B cell (primary cell): ENCODE measurements at regions of chr9 and their contacts with region 1.

Region 1: DNA sequence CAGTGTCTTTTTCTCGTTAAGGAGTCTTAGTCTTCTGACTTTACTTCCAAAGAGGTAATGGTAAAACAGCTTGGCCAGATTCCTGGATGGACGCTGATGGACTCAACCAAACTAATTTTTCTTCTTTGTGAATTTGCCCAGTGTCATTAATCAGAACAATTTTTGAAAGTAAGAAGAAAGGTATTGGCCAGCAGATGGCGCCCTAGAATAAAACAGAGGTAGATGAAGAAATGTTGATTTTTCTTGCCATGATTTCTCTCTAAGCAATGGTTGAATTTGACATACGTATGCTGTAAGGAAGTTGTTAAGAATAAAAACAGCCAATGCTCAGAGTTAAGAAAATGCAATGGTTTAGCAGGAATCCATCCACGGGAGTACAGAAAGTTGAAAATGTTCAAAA is 500.0 kb downstream of the DIRAS2 start:
- DNase-seq: peak; percentile 80
- ATAC-seq: no peak
- H3K4me3 ChIP-seq: no peak overlapping the region
- H3K4me3 Mint-ChIP-seq: no peak overlapping the region
- H3K27ac ChIP-seq: no peak overlapping the region
- H3K27ac Mint-ChIP-seq: no peak overlapping the region
- H3K4me1 ChIP-seq: no peaks in the 10 kb centered on the region
- H3K4me1 Mint-ChIP-seq: peaks cover 4% of the 10 kb centered on the region
- H3K27me3 ChIP-seq: peaks cover 0 to 4% (median 0%) of the 10 kb centered on the region in 4 experiments
- H3K27me3 Mint-ChIP-seq: peaks cover 17% of the 10 kb centered on the region
- CTCF ChIP-seq: peak; percentile 76

Region 2: DNA sequence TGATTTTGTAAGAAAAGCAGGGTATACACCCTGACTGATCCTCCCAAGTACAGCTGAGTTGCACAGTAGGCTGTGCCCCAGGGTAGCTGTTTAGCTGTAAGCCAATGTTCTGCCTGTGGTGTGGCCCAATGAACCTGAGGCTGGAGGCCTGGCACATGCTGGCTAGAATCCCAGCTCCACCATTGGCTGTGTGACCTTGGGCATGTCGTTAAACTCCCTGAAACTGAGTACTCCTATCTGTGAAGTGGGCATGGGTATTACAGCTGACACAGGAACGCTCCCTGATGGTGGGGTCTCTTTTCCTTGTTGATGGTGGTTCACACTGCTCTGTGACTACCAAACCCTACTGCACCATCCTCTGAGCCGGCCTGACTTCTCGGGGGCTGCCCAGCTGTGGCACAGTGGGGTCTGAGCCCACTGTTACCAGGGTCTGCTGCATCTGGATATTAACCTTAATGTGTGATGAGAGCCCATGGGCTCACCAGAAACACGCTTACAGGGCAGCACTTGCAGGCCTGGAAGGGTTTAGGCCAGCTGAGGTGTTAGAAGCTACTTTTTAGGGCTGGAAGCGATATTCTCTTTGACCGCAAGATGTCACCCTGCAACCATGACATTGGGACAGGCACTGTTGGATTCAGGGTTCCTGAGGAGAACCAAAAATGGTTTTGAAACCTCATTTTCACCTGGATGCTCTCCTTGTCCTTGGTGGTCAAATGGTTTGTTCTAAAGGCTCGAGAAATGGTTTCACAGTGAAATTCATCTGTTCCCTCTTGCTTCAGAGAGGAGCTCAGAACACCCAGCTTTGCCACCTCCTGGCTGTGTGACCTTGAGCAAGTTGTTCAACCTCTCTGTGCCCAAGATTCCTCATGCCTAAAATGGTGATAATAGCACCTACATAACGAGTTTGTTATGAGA is 544.6 kb before region 1 on chr9:
- CTCF ChIA-PET with region 1: interaction called, 23 read pairs
- POLR2A ChIA-PET with region 1: no interaction called
- intact Hi-C with region 1: no loop called
- DNase-seq: peak; percentile 74
- ATAC-seq: no peak
- H3K4me3 ChIP-seq: no peak overlapping the region
- H3K4me3 Mint-ChIP-seq: no peak overlapping the region
- H3K27ac ChIP-seq: no peak overlapping the region
- H3K27ac Mint-ChIP-seq: no peak overlapping the region
- H3K4me1 ChIP-seq: peaks cover 0 to 3% of the 10 kb centered on the region in 2 donors
- H3K4me1 Mint-ChIP-seq: peaks cover 1% of the 10 kb centered on the region
- H3K27me3 ChIP-seq: peaks cover 0 to 14% (median 3%) of the 10 kb centered on the region in 4 experiments
- H3K27me3 Mint-ChIP-seq: peaks cover 22% of the 10 kb centered on the region
- CTCF ChIP-seq: peak; percentile 80

Region 3: GRCh38 chr9:90201766-90202165 is 59.2 kb after region 1 on chr9:
- CTCF ChIA-PET with region 1: interaction called, 33 read pairs
- POLR2A ChIA-PET with region 1: no interaction called
- intact Hi-C with region 1: no loop called
- DNase-seq: no peak
- ATAC-seq: no peak
- H3K4me3 ChIP-seq: no peak overlapping the region
- H3K4me3 Mint-ChIP-seq: no peak overlapping the region
- H3K27ac ChIP-seq: no peak overlapping the region
- H3K27ac Mint-ChIP-seq: no peak overlapping the region
- H3K4me1 ChIP-seq: peaks cover 18 to 20% of the 10 kb centered on the region in 2 donors
- H3K4me1 Mint-ChIP-seq: peaks cover 21% of the 10 kb centered on the region
- H3K27me3 ChIP-seq: no peaks in the 10 kb centered on the region
- H3K27me3 Mint-ChIP-seq: no peaks in the 10 kb centered on the region
- CTCF ChIP-seq: no peak

Region 4: GRCh38 chr9:90325913-90326653 is 183.5 kb after region 1 on chr9:
- CTCF ChIA-PET with region 1: no interaction called
- POLR2A ChIA-PET with region 1: no interaction called
- intact Hi-C with region 1: loop called (anchors 10 kb)
- DNase-seq: no peak
- ATAC-seq: no peak
- H3K4me3 ChIP-seq: no peak overlapping the region
- H3K4me3 Mint-ChIP-seq: no peak overlapping the region
- H3K27ac ChIP-seq: no peak overlapping the region
- H3K27ac Mint-ChIP-seq: no peak overlapping the region
- H3K4me1 ChIP-seq: no peaks in the 10 kb centered on the region
- H3K4me1 Mint-ChIP-seq: no peaks in the 10 kb centered on the region
- H3K27me3 ChIP-seq: peaks cover 0 to 4% (median 0%) of the 10 kb centered on the region in 4 experiments
- H3K27me3 Mint-ChIP-seq: peaks cover 33% of the 10 kb centered on the region
- CTCF ChIP-seq: no peak

Region 5: GRCh38 chr9:90773617-90774016 is 631.0 kb after region 1 on chr9:
- CTCF ChIA-PET with region 1: interaction called, 4 read pairs
- POLR2A ChIA-PET with region 1: no interaction called
- intact Hi-C with region 1: loop called (anchors 1 kb)
- DNase-seq: peak; percentile 58
- ATAC-seq: peak; percentile 28
- H3K4me3 ChIP-seq: peak overlapping the region in 1 of 5 experiments; percentile 21
- H3K4me3 Mint-ChIP-seq: peak overlapping the region; percentile 38
- H3K27ac ChIP-seq: peak overlapping the region; percentile 37 to 57
- H3K27ac Mint-ChIP-seq: peak overlapping the region; percentile 86
- H3K4me1 ChIP-seq: peaks cover 60 to 67% of the 10 kb centered on the region in 2 donors
- H3K4me1 Mint-ChIP-seq: peaks cover 67% of the 10 kb centered on the region
- H3K27me3 ChIP-seq: no peaks in the 10 kb centered on the region
- H3K27me3 Mint-ChIP-seq: no peaks in the 10 kb centered on the region
- CTCF ChIP-seq: peak; percentile 26